Activated T-helper 1 cell treated with anti-CD3 and anti-CD28 coated beads, Interleukin-12 subunit alpha, Interleukin-12 subunit beta, Interleukin-2, Interleukin-4 antibody, amounts not matched to agents 30 ng/mL and 10 ng/mL and 1 ng/mL, durations not matched to agents 14 hours and 24 hours and 36 hours (primary cell): ENCODE measurements at regions of chr1 and their contacts with region 1.

Region 1: DNA sequence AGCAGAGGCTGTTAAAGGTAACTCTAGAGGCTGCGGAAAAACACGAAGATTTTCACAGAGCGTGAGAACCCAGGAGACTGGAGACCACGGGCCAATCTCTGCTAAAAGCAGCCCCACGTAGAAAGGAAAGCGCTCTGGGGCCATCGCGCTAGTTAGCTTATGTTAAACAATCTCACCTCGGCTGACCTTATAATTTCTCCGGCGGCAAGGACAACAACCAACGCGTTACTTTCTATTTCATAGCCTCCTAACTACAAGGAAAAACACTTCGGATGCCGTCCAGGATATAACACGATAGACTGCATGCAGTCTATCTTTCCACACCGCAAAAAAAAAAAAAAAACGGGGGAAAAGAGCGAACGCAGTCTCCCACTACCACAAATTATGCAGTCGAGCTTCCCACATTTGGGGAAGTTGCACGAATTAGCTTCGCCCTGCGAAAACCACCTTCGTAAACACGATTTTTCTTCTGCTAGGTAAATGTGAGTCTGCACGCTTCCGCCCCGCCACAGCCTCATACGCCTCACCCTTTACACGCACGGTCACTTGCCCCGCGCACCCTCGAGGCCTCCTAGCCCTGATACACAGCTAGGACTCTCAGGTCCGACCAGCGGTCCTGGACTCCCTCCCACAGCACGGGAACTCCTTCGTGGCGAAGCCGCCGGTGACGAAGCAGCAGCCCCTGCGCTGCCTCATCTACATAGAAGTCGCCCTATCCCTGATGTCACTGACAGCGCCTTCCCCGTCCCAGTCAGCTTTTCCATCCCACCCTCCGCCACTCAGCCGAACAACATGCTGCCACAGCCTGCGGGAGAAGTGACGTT is 87.8 kb downstream of the PRKAB2 start:
- DNase-seq: peak; percentile 70
- H3K4me3 Mint-ChIP-seq: peak overlapping the region; percentile 87
- H3K27ac Mint-ChIP-seq: peak overlapping the region; percentile 100
- H3K4me1 Mint-ChIP-seq: peaks cover 41% of the 10 kb centered on the region
- H3K27me3 Mint-ChIP-seq: peaks cover 68% of the 10 kb centered on the region

Region 2: DNA sequence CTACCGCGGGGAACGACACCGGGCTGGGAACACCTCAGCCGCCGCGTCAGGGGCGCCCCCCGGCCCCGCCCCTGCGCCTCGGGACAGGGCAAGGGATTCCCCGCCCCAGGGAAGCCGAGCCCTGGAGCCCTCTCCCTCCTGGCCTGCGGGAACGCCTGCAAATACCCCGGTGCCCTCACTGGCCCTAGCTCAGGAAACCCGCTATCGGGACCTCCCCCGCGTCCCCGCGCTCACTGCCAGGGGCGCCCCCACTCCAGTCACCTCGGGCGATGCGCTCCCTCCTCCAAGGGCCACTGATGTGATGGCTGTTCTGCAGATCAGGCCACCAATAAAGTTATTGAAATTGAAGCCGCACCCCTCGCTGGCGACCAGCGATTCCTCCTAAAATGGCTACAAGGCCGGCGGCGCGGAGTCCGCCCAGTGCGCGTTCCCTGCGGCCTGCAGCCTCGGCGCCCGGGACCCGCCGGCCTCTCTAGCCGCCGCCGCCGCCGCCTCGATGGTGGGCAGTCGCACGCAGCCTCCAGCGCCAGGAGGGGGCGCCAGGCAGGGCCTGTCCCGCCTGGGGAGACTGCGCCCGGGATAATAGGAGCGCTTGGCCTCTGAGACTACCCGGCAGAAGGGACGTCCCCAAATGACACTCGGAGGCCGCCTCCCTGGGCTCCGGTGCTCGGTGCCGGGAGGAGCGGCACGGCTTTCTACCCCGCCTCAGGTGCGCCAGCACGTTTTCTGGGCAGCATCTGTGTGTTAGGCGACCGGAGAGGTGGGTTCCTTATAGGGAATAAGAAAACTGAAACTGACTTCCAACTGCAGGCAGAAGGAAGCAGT is 87.9 kb after region 1 on chr1 and contains the start of gene PRKAB2:
- intact Hi-C with region 1: loop called (anchors 1 kb)
- DNase-seq: peak; percentile 86
- H3K4me3 Mint-ChIP-seq: peak within 1 kb of the TSS; percentile 96
- H3K27ac Mint-ChIP-seq: peak within 1 kb of the TSS; percentile 94
- H3K4me1 Mint-ChIP-seq: peaks cover 31% of the 10 kb centered on the region
- H3K27me3 Mint-ChIP-seq: peaks cover 2% of the 10 kb centered on the region
- total RNA-seq, gene PRKAB2: 8.0 and 9.3 TPM in 2 replicates

Region 3: DNA sequence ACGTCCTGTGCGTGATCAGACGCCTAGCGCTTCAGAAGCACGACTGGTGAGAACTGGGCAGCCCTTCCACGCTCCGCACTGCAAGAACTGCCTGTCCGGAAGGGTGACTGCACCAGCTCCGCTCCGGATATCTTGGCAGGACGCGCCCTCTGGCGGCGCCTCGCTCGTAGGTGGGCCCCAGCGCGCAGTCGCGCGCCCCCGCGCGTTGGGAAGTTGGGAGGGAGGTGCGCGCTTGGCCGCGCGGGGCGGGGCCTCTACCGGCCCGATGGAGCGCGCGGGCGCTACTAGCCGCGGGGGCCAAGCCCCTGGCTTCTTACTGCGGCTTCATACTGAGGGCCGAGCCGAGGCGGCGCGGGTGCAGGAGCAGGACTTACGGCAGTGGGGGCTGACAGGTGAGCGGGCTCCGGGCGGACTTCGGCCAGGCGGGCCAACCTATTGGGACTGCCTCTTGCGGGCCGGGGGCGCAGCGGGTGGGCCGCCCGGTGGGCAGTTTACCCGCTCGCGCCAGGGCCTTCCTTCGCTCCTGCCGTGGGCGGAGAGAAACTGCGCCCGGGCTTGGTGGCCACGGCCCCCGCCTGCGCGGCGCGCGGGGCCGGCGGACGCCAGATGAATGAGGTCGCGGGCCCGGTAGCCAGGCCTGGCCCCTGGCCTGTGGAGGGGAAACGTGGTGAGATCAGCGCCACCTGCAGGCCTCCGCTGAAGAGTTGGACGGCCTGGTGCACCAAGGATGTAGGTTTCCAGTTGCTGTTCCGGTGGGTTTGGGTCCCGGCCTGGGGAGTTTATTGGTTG is 158.1 kb after region 1 on chr1 and contains the start of gene CHD1L:
- intact Hi-C with region 1: loop called (anchors 1 kb)
- DNase-seq: peak; percentile 92
- H3K4me3 Mint-ChIP-seq: peak within 1 kb of the TSS; percentile 95
- H3K27ac Mint-ChIP-seq: peak within 1 kb of the TSS; percentile 94
- H3K4me1 Mint-ChIP-seq: peaks cover 43% of the 10 kb centered on the region
- H3K27me3 Mint-ChIP-seq: no peaks in the 10 kb centered on the region
- total RNA-seq, gene CHD1L: 67.6 and 75.1 TPM in 2 replicates

Region 4: DNA sequence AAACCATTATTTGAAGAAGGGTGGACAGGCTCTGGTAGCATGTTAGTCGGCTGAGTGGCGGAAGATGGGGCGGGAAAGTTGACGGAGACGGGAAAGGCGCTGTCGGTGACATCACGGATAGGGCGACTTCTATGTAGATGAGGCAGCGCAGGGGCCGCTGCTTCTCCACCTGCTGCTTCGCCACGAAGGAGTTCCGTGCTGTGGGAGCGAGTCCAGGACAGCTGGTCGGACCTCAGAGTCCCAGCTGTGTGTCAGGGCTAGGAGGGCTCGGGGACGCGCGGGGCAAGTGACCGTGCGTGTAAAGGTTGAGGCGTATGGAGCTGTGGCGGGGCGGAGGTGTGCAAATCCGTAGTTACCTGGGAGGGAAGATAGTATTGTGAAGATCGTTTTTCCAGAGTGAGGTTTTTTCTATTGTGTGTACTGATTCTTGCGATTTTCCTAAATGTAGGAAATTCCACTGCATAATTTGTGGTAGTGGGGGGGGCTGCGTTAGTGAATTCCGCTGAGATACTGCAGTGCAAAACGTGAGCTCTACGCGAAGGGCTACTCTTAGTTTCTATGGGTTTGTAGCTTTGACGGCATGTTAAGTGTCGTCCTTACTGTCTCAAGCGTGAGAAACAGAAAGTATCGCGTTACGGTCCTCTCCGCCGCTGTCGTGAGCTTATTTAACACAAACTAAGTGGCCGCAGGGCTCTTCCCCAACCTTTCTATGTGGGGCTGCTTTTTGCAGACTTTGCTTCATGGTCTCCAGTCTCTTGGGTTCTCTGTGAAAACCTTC is 1178.8 kb after region 1 on chr1:
- intact Hi-C with region 1: loop called (anchors 1 kb)
- DNase-seq: peak; percentile 45
- H3K4me3 Mint-ChIP-seq: peak overlapping the region; percentile 91
- H3K27ac Mint-ChIP-seq: peak overlapping the region; percentile 90
- H3K4me1 Mint-ChIP-seq: peaks cover 22% of the 10 kb centered on the region
- H3K27me3 Mint-ChIP-seq: peaks cover 25% of the 10 kb centered on the region